Activated naive CD4-positive, alpha-beta T cell treated with anti-CD3 and anti-CD28 coated beads for 36 hours (primary cell): ENCODE measurements at regions of chr20 and their contacts with region 1.

Region 1: DNA sequence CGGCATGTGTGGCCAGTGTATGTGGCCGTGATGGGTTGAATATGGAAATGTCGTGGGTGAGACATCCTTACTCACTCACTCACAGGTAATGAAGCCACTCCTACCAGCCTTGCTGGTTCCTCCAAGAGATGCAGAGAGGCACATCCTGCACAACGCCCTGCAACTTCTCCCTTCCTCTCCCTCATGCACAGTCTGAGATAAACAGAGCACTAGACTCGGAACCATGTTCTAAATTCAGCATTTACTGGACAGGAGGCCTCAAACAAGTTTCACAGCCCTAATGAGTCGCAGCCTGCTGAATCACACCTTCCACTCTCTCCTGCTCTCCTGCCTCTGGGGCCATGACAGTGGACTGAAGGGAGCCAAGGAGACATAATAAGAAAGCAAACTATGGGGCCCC is 91.2 kb downstream of the ISM1 start:
- DNase-seq: peak; percentile 11
- H3K4me3 Mint-ChIP-seq: no peak overlapping the region
- H3K27ac Mint-ChIP-seq: no peak overlapping the region
- H3K4me1 Mint-ChIP-seq: no peaks in the 10 kb centered on the region
- H3K27me3 Mint-ChIP-seq: peaks cover 12% of the 10 kb centered on the region

Region 2: GRCh38 chr20:13336308-13337089 is 24.2 kb after region 1 on chr20:
- CTCF ChIA-PET with region 1: no interaction called
- intact Hi-C with region 1: loop called (anchors 2 kb)
- DNase-seq: peak; percentile 42
- H3K4me3 Mint-ChIP-seq: no peak overlapping the region
- H3K27ac Mint-ChIP-seq: no peak overlapping the region
- H3K4me1 Mint-ChIP-seq: peaks cover 17% of the 10 kb centered on the region
- H3K27me3 Mint-ChIP-seq: peaks cover 5% of the 10 kb centered on the region

Region 3: DNA sequence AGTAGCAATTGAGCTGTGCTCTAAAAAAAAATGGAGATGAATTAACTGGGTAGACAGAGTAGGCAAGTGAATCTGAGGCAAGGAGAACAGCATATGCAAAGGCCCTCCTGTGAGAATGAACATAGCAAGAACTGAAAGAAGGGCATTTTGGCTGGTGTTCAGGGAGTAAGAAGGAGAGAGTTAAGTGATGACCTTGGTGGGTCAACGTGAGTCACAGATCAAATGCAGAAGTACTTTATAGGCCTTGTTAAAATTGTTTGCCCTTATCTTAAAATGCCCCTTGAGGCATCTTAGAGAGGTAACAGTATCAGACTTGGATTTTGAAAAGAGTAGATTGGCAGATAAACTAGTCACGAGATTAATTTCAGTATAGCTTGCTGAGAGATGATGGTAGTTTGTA is 497.1 kb after region 1 on chr20:
- CTCF ChIA-PET with region 1: no interaction called
- intact Hi-C with region 1: no loop called
- DNase-seq: no peak
- H3K4me3 Mint-ChIP-seq: no peak overlapping the region
- H3K27ac Mint-ChIP-seq: no peak overlapping the region
- H3K4me1 Mint-ChIP-seq: peaks cover 7% of the 10 kb centered on the region
- H3K27me3 Mint-ChIP-seq: no peaks in the 10 kb centered on the region